ENCODE measurements at regions of chr6 and their contacts with region 1.

Region 1: DNA sequence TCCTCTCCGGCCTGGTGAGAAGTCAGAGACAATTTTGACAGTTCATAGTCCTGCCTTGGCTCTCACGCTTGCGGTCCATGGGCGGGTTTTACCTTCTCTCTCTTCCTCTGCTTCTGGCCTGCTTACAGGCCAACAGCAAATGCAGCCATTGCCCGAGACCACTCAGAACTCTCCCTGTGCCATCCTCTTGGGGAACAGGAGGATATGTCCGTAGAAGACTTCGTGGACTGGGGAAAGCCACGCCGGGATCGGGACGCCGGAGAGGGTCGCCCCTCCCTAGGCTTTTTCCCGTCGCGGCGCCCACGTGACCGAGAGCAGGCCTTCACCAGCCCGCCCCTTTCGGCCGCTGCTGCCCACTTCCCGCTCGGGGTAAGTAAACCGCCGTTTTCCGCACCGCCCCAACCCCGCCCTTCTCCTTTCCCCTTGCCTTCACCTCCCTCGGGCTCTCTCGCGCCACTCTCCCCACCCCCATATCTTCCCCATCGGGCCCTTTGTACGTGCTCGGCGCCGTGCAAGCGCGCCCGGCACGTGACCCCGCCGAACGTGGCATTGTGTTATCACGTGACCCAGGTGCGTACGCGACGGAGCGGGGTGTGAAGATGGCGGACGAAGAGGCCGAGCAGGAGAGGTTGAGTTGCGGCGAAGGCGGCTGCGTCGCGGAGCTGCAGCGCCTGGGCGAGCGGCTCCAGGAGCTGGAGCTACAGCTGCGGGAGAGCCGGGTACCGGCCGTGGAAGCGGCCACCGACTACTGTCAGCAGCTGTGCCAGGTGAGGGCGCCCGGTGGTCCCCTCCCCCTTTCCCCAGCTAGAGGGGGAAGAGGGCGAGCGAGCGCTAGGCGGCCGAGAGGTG is at the start of gene ZNF292:
- DNase-seq: peak; percentile 91 to 96 (median 96)
- H3K4me3 ChIP-seq: peak within 1 kb of the TSS; percentile 73 to 95 (median 81)
- H3K4me3 Mint-ChIP-seq: peak within 1 kb of the TSS; percentile 93 to 97
- H3K27ac ChIP-seq: peak within 1 kb of the TSS; percentile 93 to 96
- H3K27ac Mint-ChIP-seq: peak within 1 kb of the TSS; percentile 91 to 98 (median 97)
- H3K4me1 ChIP-seq: peaks cover 27 to 47% of the 10 kb centered on the region in 2 donors
- H3K4me1 Mint-ChIP-seq: peaks cover 37% of the 10 kb centered on the region
- H3K27me3 ChIP-seq: peaks cover 0 to 5% of the 10 kb centered on the region in 2 donors
- H3K27me3 Mint-ChIP-seq: peaks cover 0 to 11% (median 10%) of the 10 kb centered on the region in 3 donors
- CTCF ChIP-seq: no peak
- polyA plus RNA-seq, gene ZNF292: 4.8 to 7.7 (median 7.6) TPM

Region 2: DNA sequence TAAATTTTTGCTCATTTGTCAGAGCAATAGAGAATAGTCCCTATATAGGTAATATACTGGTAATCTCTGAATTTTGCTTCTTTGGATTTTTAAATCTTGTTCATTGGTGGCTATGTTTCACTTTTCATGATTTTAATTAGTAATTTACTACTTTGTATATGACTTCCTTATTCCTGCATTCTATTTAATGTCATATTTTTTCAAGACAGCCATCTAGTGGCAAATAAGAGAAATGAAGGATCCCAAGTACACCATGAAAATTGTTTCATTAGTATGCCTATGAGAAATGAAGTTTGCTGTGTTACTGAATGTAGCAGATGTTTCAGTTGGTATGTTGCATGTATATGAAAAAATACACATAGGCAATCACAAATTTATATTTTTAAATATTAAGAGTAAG is 82.6 kb after region 1 on chr6:
- intact Hi-C with region 1: loop called in 1 of 2 experiments (anchors 10 kb)
- DNase-seq: peak; percentile 6 to 34 (median 27)
- H3K4me3 ChIP-seq: no peak overlapping the region
- H3K4me3 Mint-ChIP-seq: no peak overlapping the region
- H3K27ac ChIP-seq: no peak overlapping the region
- H3K27ac Mint-ChIP-seq: no peak overlapping the region
- H3K4me1 ChIP-seq: no peaks in the 10 kb centered on the region
- H3K4me1 Mint-ChIP-seq: no peaks in the 10 kb centered on the region
- H3K27me3 ChIP-seq: no peaks in the 10 kb centered on the region
- H3K27me3 Mint-ChIP-seq: no peaks in the 10 kb centered on the region
- CTCF ChIP-seq: peak; percentile 77

Region 3: DNA sequence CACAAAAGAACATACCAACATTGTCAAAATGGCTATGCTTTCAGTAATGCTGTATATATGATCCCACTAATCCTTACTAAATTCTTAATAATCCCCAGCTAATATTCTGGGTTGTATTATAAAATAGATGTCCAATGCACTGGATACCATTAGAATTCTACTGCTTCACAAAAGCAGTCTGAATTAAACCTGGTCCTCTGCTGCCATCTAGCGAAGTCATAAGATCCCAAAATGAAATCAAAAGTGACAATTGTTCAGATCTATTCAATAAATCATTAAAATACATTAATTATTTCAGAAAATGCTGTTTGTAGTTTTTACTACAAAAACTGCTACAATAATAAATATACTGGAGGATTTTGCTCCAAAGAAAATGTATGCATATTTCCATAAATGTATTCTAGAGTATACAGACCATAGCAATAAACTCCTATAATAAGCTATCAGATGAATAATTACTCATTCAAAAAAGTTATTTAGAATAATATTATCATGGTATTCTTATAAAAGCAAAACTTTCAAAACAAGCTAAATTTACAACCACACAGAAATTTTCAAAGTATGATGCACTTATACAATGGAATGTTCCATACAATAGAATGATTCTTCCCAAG is 1715.6 kb after region 1 on chr6:
- intact Hi-C with region 1: loop called in 1 of 2 experiments (anchors 10 kb)
- DNase-seq: peak; percentile 27 to 48 (median 35)
- H3K4me3 ChIP-seq: no peak overlapping the region
- H3K4me3 Mint-ChIP-seq: no peak overlapping the region
- H3K27ac ChIP-seq: no peak overlapping the region
- H3K27ac Mint-ChIP-seq: no peak overlapping the region
- H3K4me1 ChIP-seq: no peaks in the 10 kb centered on the region
- H3K4me1 Mint-ChIP-seq: peaks cover 3% of the 10 kb centered on the region
- H3K27me3 ChIP-seq: no peaks in the 10 kb centered on the region
- H3K27me3 Mint-ChIP-seq: no peaks in the 10 kb centered on the region
- CTCF ChIP-seq: peak; percentile 76